PC-9 (cell line): ENCODE measurements at regions of chr6 and their contacts with region 1.

Region 1: DNA sequence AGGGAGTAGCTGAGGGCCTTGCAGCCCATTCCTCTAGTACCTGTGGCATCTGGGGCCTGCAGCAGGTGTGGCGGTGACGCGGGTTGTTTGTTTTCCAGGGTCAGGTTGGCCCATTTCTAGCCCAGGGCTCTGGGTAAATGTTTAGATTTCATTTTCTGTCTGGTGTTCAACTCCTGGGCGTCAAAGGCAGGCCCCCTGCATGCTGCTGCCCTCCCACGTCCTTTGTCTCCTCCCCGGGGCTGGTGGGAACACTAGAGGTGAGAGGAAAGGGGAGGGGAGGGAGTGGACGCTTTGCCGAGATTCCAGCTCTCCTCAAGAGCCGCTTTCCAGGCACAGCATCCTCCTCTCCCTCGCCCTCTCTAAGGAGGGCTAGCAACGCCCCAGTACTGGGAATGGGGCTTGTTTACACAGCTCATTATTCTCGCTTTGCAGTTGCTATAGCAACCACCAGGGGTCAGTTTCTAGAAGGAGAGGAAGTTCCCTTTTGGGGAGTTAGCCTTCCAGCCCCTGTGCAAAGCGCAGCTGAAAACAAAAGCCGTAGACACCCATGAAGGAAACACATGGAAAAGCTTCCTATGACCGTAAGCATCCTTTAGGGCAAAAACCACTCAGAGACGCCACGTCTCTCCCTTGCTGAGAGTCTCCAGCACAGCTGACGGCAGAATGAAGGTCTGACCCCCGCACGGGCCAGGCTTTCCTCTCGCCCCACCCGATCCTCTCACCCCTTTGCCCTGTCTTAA is 170.6 kb downstream of the LY86 start:
- DNase-seq: no peak
- H3K4me3 ChIP-seq: no peak overlapping the region
- H3K27ac ChIP-seq: no peak overlapping the region
- H3K4me1 ChIP-seq: no peaks in the 10 kb centered on the region
- H3K27me3 ChIP-seq: no peaks in the 10 kb centered on the region
- CTCF ChIP-seq: peak; percentile 41; the same call in 1 of the 2 replicates

Region 2: GRCh38 chr6:7246401-7247178 is 487.5 kb after region 1 on chr6:
- CTCF ChIA-PET with region 1: interaction called, 10 read pairs
- POLR2A ChIA-PET with region 1: no interaction called
- intact Hi-C with region 1: no loop called
- DNase-seq: no peak
- H3K4me3 ChIP-seq: no peak overlapping the region
- H3K27ac ChIP-seq: no peak overlapping the region
- H3K4me1 ChIP-seq: peaks cover 18% of the 10 kb centered on the region; the same call in 1 of the 2 replicates
- H3K27me3 ChIP-seq: no peaks in the 10 kb centered on the region
- CTCF ChIP-seq: no peak